ENCODE measurements at regions of chr14 and their contacts with region 1.

Region 1: GRCh38 chr14:69845787-69846186 is 33.4 kb upstream of the SMOC1 start:
- DNase-seq: no peak

Region 2: GRCh38 chr14:70013269-70013873 is 167.6 kb after region 1 on chr14:
- in situ Hi-C with region 1: loop called (anchors 25 kb)
- DNase-seq: peak; percentile 36